CD4-positive, alpha-beta memory T cell (primary cell): ENCODE measurements at regions of chr11 and their contacts with region 1.

Region 1: DNA sequence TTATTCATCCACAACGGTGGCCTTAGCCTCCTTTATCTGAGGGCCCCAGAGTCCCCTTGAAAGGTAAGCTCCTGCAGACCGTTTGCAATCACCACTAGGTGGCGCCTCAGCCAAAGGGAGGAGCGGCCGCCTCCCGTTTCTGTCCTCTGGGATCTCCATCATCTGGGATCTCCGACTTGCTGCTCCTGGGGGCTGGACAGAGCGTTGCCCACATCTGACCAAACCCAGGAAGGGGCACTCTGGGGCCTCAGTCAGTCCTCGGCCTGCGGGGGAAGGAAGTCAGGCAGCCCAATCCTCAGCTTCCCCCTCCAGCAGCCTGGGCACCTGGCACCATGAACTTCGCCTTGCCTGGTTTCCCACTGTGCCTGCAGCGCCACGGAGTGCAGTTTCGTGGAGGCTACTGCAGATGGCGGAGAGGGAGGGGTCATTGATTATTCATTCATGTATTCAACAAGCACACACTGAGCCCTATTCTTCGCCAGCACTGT is 23.5 kb downstream of the TP53I11 start:
- DNase-seq: peak in 4 of 5 donors; percentile 35 to 51 (median 38)
- H3K4me3 ChIP-seq: no peak overlapping the region
- H3K4me3 Mint-ChIP-seq: no peak overlapping the region
- H3K27ac ChIP-seq: no peak overlapping the region
- H3K27ac Mint-ChIP-seq: peak overlapping the region in 1 of 7 donors; percentile 31
- H3K4me1 ChIP-seq: no peaks in the 10 kb centered on the region
- H3K4me1 Mint-ChIP-seq: peaks cover 0 to 7% (median 0%) of the 10 kb centered on the region in 4 donors
- H3K27me3 ChIP-seq: no peaks in the 10 kb centered on the region
- H3K27me3 Mint-ChIP-seq: no peaks in the 10 kb centered on the region

Region 2: DNA sequence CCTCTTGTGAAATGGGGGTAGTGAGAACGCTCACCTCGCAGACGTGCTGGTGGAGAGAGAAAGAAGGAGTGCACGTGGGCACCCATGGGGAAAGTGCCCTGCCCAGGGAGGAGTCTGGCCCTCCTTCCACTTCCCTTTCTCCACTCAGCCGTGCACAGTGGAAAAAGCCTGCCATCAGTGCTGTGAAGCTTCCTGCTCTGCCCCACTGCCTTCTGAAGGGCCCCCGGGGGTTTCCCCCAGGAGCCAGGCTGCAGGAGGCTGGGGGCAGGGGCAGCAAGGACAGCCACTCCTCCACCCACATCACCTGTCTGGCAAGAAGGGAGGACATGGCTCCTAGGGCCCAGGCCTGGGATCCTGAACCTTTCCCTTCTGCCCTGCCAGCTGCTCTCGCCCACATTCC is 15.9 kb after region 1 on chr11:
- CTCF ChIA-PET with region 1: interaction called, 104 read pairs
- POLR2A ChIA-PET with region 1: no interaction called
- intact Hi-C with region 1: no loop called
- DNase-seq: no peak
- H3K4me3 ChIP-seq: no peak overlapping the region
- H3K4me3 Mint-ChIP-seq: no peak overlapping the region
- H3K27ac ChIP-seq: no peak overlapping the region
- H3K27ac Mint-ChIP-seq: peak overlapping the region in 2 of 7 donors; percentile 37 to 72
- H3K4me1 ChIP-seq: peaks cover 11% of the 10 kb centered on the region
- H3K4me1 Mint-ChIP-seq: peaks cover 7 to 31% (median 14%) of the 10 kb centered on the region in 4 donors
- H3K27me3 ChIP-seq: no peaks in the 10 kb centered on the region
- H3K27me3 Mint-ChIP-seq: no peaks in the 10 kb centered on the region

Region 3: DNA sequence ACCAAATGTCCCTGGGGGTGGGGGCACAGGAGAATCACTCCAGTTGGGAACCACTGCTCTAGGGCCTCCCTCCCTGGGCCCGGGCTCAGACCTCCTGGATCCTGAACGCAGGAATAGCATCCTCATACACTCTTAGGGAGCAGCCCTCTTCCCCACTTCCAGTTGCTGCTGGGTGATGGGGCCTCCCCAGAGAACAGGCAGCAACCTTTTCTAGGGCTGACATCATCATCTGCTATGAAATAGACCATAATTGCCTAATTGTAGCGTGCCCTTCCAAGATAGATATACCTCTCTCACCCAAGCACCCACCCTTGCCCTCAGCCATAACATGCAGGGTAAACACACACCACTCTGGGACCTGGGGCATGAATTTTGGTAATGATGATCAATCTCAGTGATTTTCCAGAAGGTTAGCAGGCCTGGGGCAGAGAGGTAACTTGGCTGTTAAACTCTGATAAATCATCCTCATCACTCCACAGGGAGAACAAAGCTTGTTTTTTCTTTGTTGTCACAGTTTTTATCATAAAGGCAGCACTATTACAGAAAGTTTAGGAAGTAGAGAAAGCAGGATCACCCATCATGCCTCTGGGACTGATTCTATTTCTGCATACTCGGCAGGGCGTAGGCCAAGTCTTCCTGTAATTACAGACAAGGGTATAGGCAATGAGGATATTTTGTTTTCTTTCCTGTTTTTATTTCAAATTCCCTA is 130.9 kb after region 1 on chr11:
- CTCF ChIA-PET with region 1: no interaction called
- POLR2A ChIA-PET with region 1: no interaction called
- intact Hi-C with region 1: no loop called
- DNase-seq: no peak
- H3K4me3 ChIP-seq: no peak overlapping the region
- H3K4me3 Mint-ChIP-seq: no peak overlapping the region
- H3K27ac ChIP-seq: no peak overlapping the region
- H3K27ac Mint-ChIP-seq: peak overlapping the region in 1 of 7 donors; percentile 63
- H3K4me1 ChIP-seq: no peaks in the 10 kb centered on the region
- H3K4me1 Mint-ChIP-seq: no peaks in the 10 kb centered on the region
- H3K27me3 ChIP-seq: no peaks in the 10 kb centered on the region
- H3K27me3 Mint-ChIP-seq: peaks cover 0 to 1% of the 10 kb centered on the region in 2 donors

Region 4: DNA sequence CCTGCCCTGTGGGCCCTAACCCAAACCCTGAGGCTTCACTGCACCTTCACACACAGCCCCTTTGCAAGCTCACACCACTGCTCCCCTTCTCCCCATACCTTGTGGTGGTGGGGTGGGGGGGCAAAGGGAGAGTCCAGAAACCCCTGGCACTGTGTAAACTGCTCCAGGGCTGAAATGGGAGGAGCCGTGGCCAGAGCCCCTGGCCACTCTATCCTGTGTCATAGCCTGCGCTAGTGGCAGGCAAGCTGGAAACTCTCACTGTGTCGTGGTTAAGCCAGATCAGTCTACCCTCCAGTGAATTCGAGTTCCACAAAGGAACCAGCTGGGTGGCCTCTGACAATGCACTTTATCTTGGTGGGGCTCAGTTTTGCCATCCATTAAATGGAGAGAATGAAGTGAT is 367.3 kb after region 1 on chr11:
- CTCF ChIA-PET with region 1: interaction called, 3 read pairs
- POLR2A ChIA-PET with region 1: no interaction called
- intact Hi-C with region 1: loop called (anchors 5 kb)
- DNase-seq: no peak
- H3K4me3 ChIP-seq: no peak overlapping the region
- H3K4me3 Mint-ChIP-seq: no peak overlapping the region
- H3K27ac ChIP-seq: no peak overlapping the region
- H3K27ac Mint-ChIP-seq: no peak overlapping the region
- H3K4me1 ChIP-seq: no peaks in the 10 kb centered on the region
- H3K4me1 Mint-ChIP-seq: no peaks in the 10 kb centered on the region
- H3K27me3 ChIP-seq: peaks cover 6% of the 10 kb centered on the region
- H3K27me3 Mint-ChIP-seq: peaks cover 16 to 24% of the 10 kb centered on the region in 2 donors

Region 5: GRCh38 chr11:45332276-45332934 is 405.2 kb after region 1 on chr11:
- CTCF ChIA-PET with region 1: interaction called, 9 read pairs
- POLR2A ChIA-PET with region 1: interaction called, 3 read pairs
- intact Hi-C with region 1: loop called (anchors 5 kb)
- DNase-seq: peak in 4 of 5 donors; percentile 32 to 42 (median 38)
- H3K4me3 ChIP-seq: no peak overlapping the region
- H3K4me3 Mint-ChIP-seq: no peak overlapping the region
- H3K27ac ChIP-seq: no peak overlapping the region
- H3K27ac Mint-ChIP-seq: peak overlapping the region in 1 of 7 donors; percentile 75
- H3K4me1 ChIP-seq: no peaks in the 10 kb centered on the region
- H3K4me1 Mint-ChIP-seq: peaks cover 0 to 1% (median 0%) of the 10 kb centered on the region in 4 donors
- H3K27me3 ChIP-seq: peaks cover 10% of the 10 kb centered on the region
- H3K27me3 Mint-ChIP-seq: peaks cover 11 to 14% of the 10 kb centered on the region in 2 donors